Left lung (tissue), 14 donors: ENCODE measurements at regions of chr12 and their contacts with region 1.

Region 1: GRCh38 chr12:64551698-64552097 is 58.6 kb upstream of the RASSF3 start:
- DNase-seq: no peak
- ATAC-seq: no peak
- H3K4me3 ChIP-seq: no peak overlapping the region
- H3K27ac ChIP-seq: no peak overlapping the region
- H3K4me1 ChIP-seq: peaks cover 0 to 9% of the 10 kb centered on the region in 2 donors
- H3K27me3 ChIP-seq: no peaks in the 10 kb centered on the region
- CTCF ChIP-seq: no peak

Region 2: DNA sequence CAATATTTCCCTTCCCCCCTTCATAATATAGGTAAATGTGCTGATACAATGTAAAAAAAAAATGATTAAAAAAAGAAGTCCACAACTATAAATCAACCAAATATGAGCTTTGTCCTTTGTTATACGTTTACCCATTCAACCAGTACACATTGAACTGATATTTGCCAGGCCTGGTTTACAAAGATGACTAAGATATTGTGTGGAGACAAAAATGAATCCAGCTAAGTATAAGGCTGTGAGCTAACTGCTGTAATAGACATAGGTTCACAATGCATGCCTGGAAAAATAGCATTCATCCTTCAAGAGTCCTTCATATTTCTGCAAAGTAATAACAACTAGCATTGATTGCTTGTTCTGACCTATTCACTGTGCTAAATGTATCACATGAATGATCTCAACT is 168.0 kb before region 1 on chr12:
- intact Hi-C with region 1: no loop called
- DNase-seq: no peak
- ATAC-seq: no peak
- H3K4me3 ChIP-seq: no peak overlapping the region
- H3K27ac ChIP-seq: no peak overlapping the region
- H3K4me1 ChIP-seq: no peaks in the 10 kb centered on the region
- H3K27me3 ChIP-seq: no peaks in the 10 kb centered on the region
- CTCF ChIP-seq: no peak

Region 3: DNA sequence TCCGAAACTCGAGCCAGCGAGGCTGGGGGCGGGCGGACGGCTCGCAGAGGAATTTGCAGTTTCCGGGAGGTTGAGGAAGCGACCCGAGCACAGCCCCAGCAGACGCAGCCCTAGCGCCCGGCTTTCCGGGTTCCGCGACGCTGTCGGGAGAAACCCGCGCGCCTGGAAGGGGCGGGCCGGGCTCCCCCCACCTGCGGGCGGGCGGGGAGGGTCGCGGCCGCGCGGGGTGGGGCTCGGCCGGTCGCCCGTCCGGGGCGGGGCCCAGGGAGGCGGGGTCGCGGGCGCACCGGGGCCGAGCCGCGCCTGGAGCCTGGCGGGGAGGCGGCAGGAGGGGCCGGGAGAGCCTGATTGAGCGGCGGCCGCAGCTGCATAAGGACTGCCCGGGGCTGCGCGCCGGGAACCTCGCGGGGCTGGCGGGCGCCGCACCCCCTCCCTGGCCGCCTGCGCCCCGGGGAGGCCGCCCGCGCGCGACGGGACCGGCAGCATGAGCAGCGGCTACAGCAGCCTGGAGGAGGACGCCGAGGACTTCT is 58.5 kb after region 1 on chr12 and contains the start of gene RASSF3:
- intact Hi-C with region 1: loop called in 1 of 2 experiments (anchors 10 kb)
- DNase-seq: peak; percentile 74 to 96 (median 83)
- ATAC-seq: peak; percentile 82
- H3K4me3 ChIP-seq: peak within 1 kb of the TSS; percentile 76 to 96
- H3K27ac ChIP-seq: peak within 1 kb of the TSS; percentile 93 to 99
- H3K4me1 ChIP-seq: peaks cover 7 to 52% of the 10 kb centered on the region in 2 donors
- H3K27me3 ChIP-seq: no peaks in the 10 kb centered on the region
- CTCF ChIP-seq: no peak
- polyA plus RNA-seq, gene RASSF3: 30.3 to 38.0 (median 33.5) TPM